Body of pancreas (tissue), 4 donors: ENCODE measurements at regions of chr1 and their contacts with region 1.

Region 1: GRCh38 chr1:210584439-210585113 is 255.9 kb downstream of the HHAT start:
- DNase-seq: peak; percentile 73 to 85 (median 76)
- ATAC-seq: peak; percentile 65
- H3K4me3 ChIP-seq: no peak overlapping the region
- H3K27ac ChIP-seq: no peak overlapping the region
- H3K4me1 ChIP-seq: no peaks in the 10 kb centered on the region
- H3K27me3 ChIP-seq: no peaks in the 10 kb centered on the region
- CTCF ChIP-seq: peak; percentile 30 to 71 (median 63)
- POLR2A ChIP-seq: no peak

Region 2: DNA sequence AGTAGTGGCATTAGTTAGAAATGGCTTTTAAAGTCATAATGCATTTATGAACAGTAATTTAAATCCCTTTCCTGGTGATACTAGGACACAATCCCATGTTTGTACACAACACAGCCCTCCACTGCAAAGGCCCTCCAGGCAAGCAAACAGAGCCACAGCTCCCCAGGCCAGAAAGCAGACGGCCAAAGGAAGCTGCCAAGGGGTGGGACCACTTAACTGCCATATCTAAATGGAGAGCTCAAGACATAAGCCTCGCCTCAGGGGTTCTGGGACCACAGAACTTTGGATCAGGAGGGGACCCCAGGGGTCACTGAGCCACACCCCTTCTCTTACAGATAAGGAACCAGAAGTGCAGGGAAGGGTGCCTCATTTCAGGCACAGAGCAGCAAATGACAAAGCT is 359.7 kb after region 1 on chr1:
- intact Hi-C with region 1: loop called (anchors 10 kb)
- DNase-seq: no peak
- ATAC-seq: no peak
- H3K4me3 ChIP-seq: no peak overlapping the region
- H3K27ac ChIP-seq: no peak overlapping the region
- H3K4me1 ChIP-seq: peaks cover 8% of the 10 kb centered on the region
- H3K27me3 ChIP-seq: no peaks in the 10 kb centered on the region
- CTCF ChIP-seq: no peak
- POLR2A ChIP-seq: no peak